OCI-LY7 (cell line): ENCODE measurements at regions of chr1 and their contacts with region 1.

Region 1: DNA sequence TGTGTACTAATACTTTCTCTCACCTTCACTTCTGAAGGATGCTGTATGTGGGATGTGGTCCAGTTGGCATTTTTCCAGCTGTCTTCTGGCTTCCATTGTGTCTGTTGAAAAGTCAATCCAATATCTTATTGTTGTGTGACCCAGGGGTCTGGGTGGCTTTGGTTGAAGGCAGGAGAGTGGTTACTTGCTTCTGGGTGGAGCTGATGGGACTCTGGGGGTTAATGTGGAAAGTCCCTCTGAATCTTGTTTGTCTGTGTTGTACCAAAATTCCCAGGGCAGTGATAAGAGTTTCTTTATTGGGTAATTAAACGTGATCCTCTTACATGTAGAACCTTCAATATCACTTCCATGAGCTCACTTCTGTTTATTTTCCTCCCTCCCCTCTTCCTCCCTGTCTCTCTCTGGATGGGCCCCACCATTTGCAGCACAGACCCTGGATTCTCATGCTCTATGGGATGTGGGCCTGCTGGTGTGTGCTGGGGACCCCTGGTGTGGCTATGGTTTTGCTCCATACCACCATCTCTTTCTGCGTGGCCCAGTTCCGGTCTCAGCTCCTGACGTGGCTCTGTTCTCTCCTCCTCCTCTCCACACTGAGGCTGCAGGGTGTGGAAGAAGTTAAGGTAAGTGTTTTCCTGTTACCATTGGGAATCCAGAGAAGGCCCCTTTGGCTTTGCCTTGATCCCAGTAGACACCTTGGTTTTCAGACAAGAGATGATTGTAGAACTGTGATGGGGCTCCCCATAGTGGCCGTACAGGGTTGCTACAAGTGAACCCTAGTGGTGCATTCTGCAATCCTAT is 71.5 kb downstream of the HHAT start:
- DNase-seq: peak; percentile 52
- H3K4me3 ChIP-seq: no peak overlapping the region
- H3K27ac ChIP-seq: no peak overlapping the region
- H3K4me1 ChIP-seq: no peaks in the 10 kb centered on the region
- CTCF ChIP-seq: peak; percentile 87

Region 2: GRCh38 chr1:209860293-209860881 is 539.9 kb before region 1 on chr1:
- CTCF ChIA-PET with region 1: no interaction called
- POLR2A ChIA-PET with region 1: no interaction called
- intact Hi-C with region 1: loop called (anchors 10 kb)
- DNase-seq: peak; percentile 79
- H3K4me3 ChIP-seq: no peak overlapping the region
- H3K27ac ChIP-seq: no peak overlapping the region
- H3K4me1 ChIP-seq: no peaks in the 10 kb centered on the region
- CTCF ChIP-seq: peak; percentile 97

Region 3: DNA sequence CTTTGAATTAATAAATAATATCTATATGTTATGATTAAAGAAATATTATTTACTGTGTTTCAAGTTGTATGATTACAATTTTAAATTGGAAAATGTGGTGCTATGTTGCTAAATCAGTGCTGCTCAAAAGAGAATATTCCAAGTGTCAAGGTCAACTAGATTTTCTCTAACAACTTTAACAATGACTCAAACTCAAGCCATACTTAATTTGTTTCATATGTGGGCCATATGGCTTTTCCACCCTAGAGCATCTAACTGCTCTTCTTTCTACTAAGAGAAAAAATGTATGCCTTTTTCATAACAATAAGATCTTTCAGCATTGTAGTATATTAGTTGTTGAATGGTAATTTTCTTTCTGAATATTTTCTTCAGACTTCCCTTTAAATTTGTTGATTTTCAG is 470.5 kb before region 1 on chr1:
- CTCF ChIA-PET with region 1: no interaction called
- POLR2A ChIA-PET with region 1: no interaction called
- intact Hi-C with region 1: no loop called
- DNase-seq: no peak
- H3K4me3 ChIP-seq: no peak overlapping the region
- H3K27ac ChIP-seq: no peak overlapping the region
- H3K4me1 ChIP-seq: no peaks in the 10 kb centered on the region
- CTCF ChIP-seq: no peak

Region 4: GRCh38 chr1:210143465-210144062 is 256.7 kb before region 1 on chr1:
- CTCF ChIA-PET with region 1: no interaction called
- POLR2A ChIA-PET with region 1: no interaction called
- intact Hi-C with region 1: loop called (anchors 1 kb)
- DNase-seq: peak; percentile 65
- H3K4me3 ChIP-seq: no peak overlapping the region
- H3K27ac ChIP-seq: no peak overlapping the region
- H3K4me1 ChIP-seq: no peaks in the 10 kb centered on the region
- CTCF ChIP-seq: peak; percentile 94

Region 5: GRCh38 chr1:210311726-210312493 is 88.3 kb before region 1 on chr1:
- CTCF ChIA-PET with region 1: no interaction called
- POLR2A ChIA-PET with region 1: no interaction called
- intact Hi-C with region 1: loop called (anchors 2 kb)
- DNase-seq: no peak
- H3K4me3 ChIP-seq: peak overlapping the region; percentile 51
- H3K27ac ChIP-seq: no peak overlapping the region
- H3K4me1 ChIP-seq: peaks cover 5% of the 10 kb centered on the region
- CTCF ChIP-seq: no peak

Region 6: GRCh38 chr1:210321552-210321951 is 78.7 kb before region 1 on chr1:
- CTCF ChIA-PET with region 1: no interaction called
- POLR2A ChIA-PET with region 1: no interaction called
- intact Hi-C with region 1: loop called (anchors 2 kb)
- DNase-seq: no peak
- H3K4me3 ChIP-seq: no peak overlapping the region
- H3K27ac ChIP-seq: no peak overlapping the region
- H3K4me1 ChIP-seq: no peaks in the 10 kb centered on the region
- CTCF ChIP-seq: no peak

Region 7: GRCh38 chr1:210696709-210697108 is 296.5 kb after region 1 on chr1:
- CTCF ChIA-PET with region 1: no interaction called
- POLR2A ChIA-PET with region 1: no interaction called
- intact Hi-C with region 1: no loop called
- DNase-seq: no peak
- H3K4me3 ChIP-seq: no peak overlapping the region
- H3K27ac ChIP-seq: no peak overlapping the region
- H3K4me1 ChIP-seq: no peaks in the 10 kb centered on the region
- CTCF ChIP-seq: no peak

Region 8: DNA sequence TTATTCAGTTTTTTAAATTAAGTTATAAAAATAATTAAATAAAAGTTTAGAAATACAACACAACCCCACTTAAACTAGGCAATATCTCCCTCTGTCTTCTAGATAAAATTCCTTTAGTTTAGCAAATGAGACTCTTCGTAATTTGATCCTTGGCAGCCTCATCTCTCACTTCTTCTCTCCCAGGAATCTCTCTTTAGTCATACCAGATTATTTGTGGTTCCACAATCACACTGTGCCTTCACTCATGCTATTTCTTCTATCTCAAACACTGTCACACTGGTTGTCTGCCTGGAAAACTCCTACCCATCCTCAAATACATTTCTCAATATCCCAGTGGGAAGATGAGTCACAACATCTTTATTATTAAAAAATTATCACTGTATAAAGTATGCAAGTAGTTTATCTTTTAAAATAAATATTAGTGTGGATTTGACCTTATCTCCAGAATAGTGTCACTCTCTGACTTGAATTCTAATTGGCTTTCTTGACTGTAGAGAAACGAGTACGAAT is 538.2 kb after region 1 on chr1:
- CTCF ChIA-PET with region 1: no interaction called
- POLR2A ChIA-PET with region 1: no interaction called
- intact Hi-C with region 1: loop called (anchors 10 kb)
- DNase-seq: no peak
- H3K4me3 ChIP-seq: no peak overlapping the region
- H3K27ac ChIP-seq: no peak overlapping the region
- H3K4me1 ChIP-seq: peaks cover 5% of the 10 kb centered on the region
- CTCF ChIP-seq: no peak

Region 9: GRCh38 chr1:211654838-211655787 is 1254.9 kb after region 1 on chr1:
- CTCF ChIA-PET with region 1: no interaction called
- POLR2A ChIA-PET with region 1: no interaction called
- intact Hi-C with region 1: loop called (anchors 10 kb)
- DNase-seq: peak; percentile 80
- H3K4me3 ChIP-seq: no peak overlapping the region
- H3K27ac ChIP-seq: no peak overlapping the region
- H3K4me1 ChIP-seq: no peaks in the 10 kb centered on the region
- CTCF ChIP-seq: peak; percentile 97